Heart left ventricle (tissue), 16 donors: ENCODE measurements at regions of chr9 and their contacts with region 1.

Region 1: GRCh38 chr9:7967093-7967827 is 167.7 kb upstream of the DMAC1 start:
- DNase-seq: no peak
- ATAC-seq: no peak
- H3K4me3 ChIP-seq: no peak overlapping the region
- H3K27ac ChIP-seq: no peak overlapping the region
- H3K4me1 ChIP-seq: peaks cover 0 to 4% (median 0%) of the 10 kb centered on the region in 12 donors
- H3K27me3 ChIP-seq: no peaks in the 10 kb centered on the region
- CTCF ChIP-seq: no peak
- POLR2A ChIP-seq: no peak

Region 2: DNA sequence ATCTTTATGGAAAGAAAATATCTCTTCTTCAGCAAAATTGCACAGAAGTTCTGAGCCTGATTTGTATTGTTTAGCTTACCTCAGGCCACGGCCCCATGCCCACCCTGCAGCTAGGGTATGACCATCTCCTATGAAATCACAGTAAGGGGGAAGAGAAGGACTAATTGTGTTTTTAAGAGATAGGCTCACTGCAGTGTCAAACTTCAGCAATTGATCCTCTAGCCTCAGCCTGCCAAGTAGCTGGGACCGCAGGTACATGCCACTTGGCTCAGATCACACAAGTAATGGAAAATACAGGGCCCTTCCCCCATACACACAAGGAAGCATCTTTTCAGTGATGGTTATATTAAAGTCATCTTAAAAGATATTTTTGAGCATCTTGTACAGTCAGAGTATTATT is 227.7 kb before region 1 on chr9:
- intact Hi-C with region 1: no loop called
- DNase-seq: no peak
- ATAC-seq: no peak
- H3K4me3 ChIP-seq: no peak overlapping the region
- H3K27ac ChIP-seq: no peak overlapping the region
- H3K4me1 ChIP-seq: no peaks in the 10 kb centered on the region
- H3K27me3 ChIP-seq: no peaks in the 10 kb centered on the region
- CTCF ChIP-seq: no peak
- POLR2A ChIP-seq: no peak

Region 3: DNA sequence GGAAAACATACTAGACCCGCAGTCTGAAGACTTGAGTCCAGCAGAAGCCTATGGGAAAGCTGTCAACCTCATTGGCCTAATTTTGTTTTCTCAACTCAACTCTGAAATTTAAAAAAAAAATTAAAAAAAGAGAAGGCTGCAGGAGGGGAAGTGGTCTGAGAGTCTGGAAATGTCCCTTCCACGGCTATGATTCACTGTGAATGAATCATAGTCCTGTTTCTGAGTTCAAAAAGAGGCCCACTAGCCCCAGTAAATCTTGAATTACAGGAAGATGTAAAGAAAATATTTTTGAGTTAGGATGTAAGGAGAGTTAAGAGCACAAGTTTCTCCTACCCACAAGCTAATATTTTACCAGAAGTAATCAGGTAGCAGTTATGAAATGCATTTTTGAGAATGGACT is 397.8 kb after region 1 on chr9:
- intact Hi-C with region 1: loop called in 1 of 10 experiments (anchors 10 kb)
- DNase-seq: no peak
- ATAC-seq: no peak
- H3K4me3 ChIP-seq: no peak overlapping the region
- H3K27ac ChIP-seq: no peak overlapping the region
- H3K4me1 ChIP-seq: peaks cover 0 to 10% (median 0%) of the 10 kb centered on the region in 12 donors
- H3K27me3 ChIP-seq: no peaks in the 10 kb centered on the region
- CTCF ChIP-seq: no peak
- POLR2A ChIP-seq: no peak